GM10248 (cell line): ENCODE measurements at regions of chr15 and their contacts with region 1.

Region 1: GRCh38 chr15:31977812-31978661 is 52.3 kb upstream of the CHRNA7 start:
- DNase-seq: peak; percentile 67
- CTCF ChIP-seq: peak; percentile 82

Region 2: GRCh38 chr15:31964586-31965307 is 13.3 kb before region 1 on chr15:
- CTCF ChIA-PET with region 1: interaction called, 26 read pairs
- POLR2A ChIA-PET with region 1: no interaction called
- DNase-seq: no peak
- CTCF ChIP-seq: no peak

Region 3: DNA sequence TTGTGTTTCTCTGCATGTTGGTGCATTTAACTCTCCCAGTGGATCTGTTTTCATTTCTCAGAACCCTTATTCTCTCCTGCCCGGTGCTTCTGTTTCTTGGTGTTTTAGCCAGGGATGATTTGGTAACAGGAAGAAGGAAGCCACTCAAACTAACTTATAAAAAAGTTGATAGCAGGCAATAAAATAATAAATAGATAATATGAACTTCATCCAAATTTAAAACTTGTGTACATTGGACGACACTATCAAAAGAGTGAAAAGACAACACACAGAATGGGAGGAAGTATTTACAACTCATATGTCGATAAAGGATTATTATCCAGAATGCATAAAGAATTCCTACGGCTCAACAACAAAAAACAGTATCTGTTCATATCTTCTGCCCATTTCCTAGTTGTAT is 15.0 kb after region 1 on chr15:
- CTCF ChIA-PET with region 1: interaction called, 16 read pairs
- POLR2A ChIA-PET with region 1: no interaction called
- DNase-seq: no peak
- CTCF ChIP-seq: no peak

Region 4: GRCh38 chr15:32057876-32058423 is 79.9 kb after region 1 on chr15:
- CTCF ChIA-PET with region 1: no interaction called
- POLR2A ChIA-PET with region 1: no interaction called
- DNase-seq: no peak
- CTCF ChIP-seq: no peak